SK-N-SH (cell line): ENCODE measurements at regions of chr11 and their contacts with region 1.

Region 1: GRCh38 chr11:119666463-119667131 is 62.4 kb downstream of the NECTIN1 start:
- DNase-seq: peak; percentile 92
- H3K4me3 ChIP-seq: no peak overlapping the region; a peak in 1 of 4 replicates
- H3K27ac ChIP-seq: peak overlapping the region in 1 of 2 experiments; percentile 25; a peak in 1 of 4 replicates
- H3K4me1 ChIP-seq: peaks cover 0 to 15% of the 10 kb centered on the region in 2 experiments; a peak in 1 of 4 replicates
- H3K27me3 ChIP-seq: no peaks in the 10 kb centered on the region
- CTCF ChIP-seq: peak; percentile 88
- EP300 ChIP-seq: no peak
- RAD21 ChIP-seq: peak; percentile 98

Region 2: DNA sequence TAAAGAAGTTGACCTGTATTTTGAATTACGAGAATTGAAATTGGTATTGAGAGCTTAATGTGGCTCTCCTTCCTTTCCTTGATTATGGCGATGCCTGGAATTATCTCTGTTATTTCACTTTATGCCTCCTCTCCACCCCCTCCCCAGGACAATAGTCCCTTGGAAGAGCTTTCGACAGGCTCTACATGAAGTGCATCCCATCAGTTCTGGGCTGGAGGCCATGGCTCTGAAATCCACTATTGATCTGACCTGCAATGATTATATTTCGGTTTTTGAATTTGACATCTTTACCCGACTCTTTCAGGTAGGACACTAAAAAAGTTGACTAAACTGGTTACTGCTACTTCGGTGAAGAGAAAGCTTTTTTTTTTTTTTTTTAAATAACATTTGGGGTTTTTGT is 392.9 kb before region 1 on chr11:
- CTCF ChIA-PET with region 1: no interaction called
- POLR2A ChIA-PET with region 1: no interaction called
- DNase-seq: no peak
- H3K4me3 ChIP-seq: no peak overlapping the region
- H3K27ac ChIP-seq: no peak overlapping the region
- H3K4me1 ChIP-seq: no peaks in the 10 kb centered on the region
- H3K27me3 ChIP-seq: no peaks in the 10 kb centered on the region
- CTCF ChIP-seq: no peak
- EP300 ChIP-seq: no peak
- RAD21 ChIP-seq: no peak

Region 3: DNA sequence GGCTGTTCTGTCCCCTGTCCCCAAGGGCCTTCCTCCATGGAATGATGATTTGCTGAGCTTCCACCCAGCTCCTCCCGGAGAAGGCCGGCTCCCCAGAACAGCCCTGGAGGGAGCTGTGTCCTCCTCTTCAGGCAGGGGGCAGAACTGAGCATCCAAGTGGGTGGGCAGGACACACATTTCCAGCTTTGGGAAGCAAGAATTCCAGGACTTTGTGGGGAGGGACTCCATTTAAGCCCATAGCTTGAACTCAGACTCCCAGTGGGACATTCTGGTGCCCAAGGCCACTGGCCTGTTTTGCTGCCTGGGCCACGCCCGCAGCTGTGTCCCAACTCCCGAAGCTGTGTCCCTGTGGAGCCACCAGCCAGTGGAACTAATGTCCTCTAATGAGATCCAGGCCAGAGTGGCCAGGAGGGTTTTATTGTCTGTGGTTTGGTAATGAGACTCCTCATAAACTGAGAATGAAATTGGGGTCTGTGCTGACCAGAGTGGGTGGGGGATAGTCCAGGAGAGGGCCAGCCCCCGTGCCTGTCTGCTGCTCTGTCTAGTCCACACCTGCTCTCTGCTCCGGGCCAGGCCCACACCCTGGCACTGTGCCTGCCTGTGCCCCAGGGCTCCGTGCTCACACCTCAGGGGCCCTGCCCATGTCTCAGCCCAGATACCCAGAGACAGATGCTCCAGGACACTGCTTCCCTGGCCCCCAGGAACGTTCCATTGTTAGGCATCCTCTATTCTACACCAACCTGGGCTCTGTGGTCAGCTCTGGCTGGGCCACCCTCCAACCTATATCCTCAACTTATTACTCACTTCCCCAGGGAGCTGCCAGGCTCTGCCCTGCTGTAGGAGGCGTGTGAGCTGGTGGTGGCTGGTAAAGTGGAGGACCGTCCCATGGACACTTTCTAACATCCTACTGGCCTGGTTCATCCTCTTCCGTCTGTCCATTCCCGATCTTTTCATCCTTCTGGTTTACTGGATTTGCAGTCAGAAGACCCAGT is 54.8 kb after region 1 on chr11:
- CTCF ChIA-PET with region 1: interaction called, 11 read pairs
- POLR2A ChIA-PET with region 1: interaction called, 5 read pairs
- DNase-seq: peak; percentile 75
- H3K4me3 ChIP-seq: no peak overlapping the region
- H3K27ac ChIP-seq: peak overlapping the region in 1 of 2 experiments; percentile 78; a peak in 2 of 4 replicates
- H3K4me1 ChIP-seq: peaks cover 9 to 91% of the 10 kb centered on the region in 2 experiments; a peak in 2 of 4 replicates
- H3K27me3 ChIP-seq: no peaks in the 10 kb centered on the region
- CTCF ChIP-seq: peak; percentile 47
- EP300 ChIP-seq: 0 out of 4 replicates have a peak, but pooled peaks of 1 of the 2 experiments have one; percentile 35
- RAD21 ChIP-seq: peak; percentile 32